K562 (cell line): ENCODE measurements at regions of chr20 and their contacts with region 1.

Region 1: GRCh38 chr20:1212607-1213396 is 9.5 kb downstream of the C20orf202 start:
- DNase-seq: peak; percentile 61 to 89 (median 67)
- ATAC-seq: peak; percentile 93
- H3K4me3 ChIP-seq: no peak overlapping the region
- H3K27ac ChIP-seq: no peak overlapping the region
- H3K4me1 ChIP-seq: peaks cover 13 to 35% of the 10 kb centered on the region in 2 experiments; a peak in 4 of 5 replicates
- H3K27me3 ChIP-seq: no peaks in the 10 kb centered on the region
- CTCF ChIP-seq: peak; percentile 70 to 84 (median 74)
- EP300 ChIP-seq: no peak
- POLR2A ChIP-seq: no peak
- RAD21 ChIP-seq: peak; percentile 79 to 87

Region 2: GRCh38 chr20:973785-974194 is 239.0 kb before region 1 on chr20:
- CTCF ChIA-PET with region 1: no interaction called
- POLR2A ChIA-PET with region 1: interaction called, 3 read pairs
- in situ Hi-C with region 1: no loop called
- intact Hi-C with region 1: loop called (anchors 10 kb)
- DNase-seq: peak; percentile 60 to 71 (median 66)
- ATAC-seq: peak; percentile 92
- H3K4me3 ChIP-seq: no peak overlapping the region
- H3K27ac ChIP-seq: no peak overlapping the region
- H3K4me1 ChIP-seq: peaks cover 0 to 7% of the 10 kb centered on the region in 2 experiments; a peak in 3 of 5 replicates
- H3K27me3 ChIP-seq: no peaks in the 10 kb centered on the region; a peak in 3 of 5 replicates
- CTCF ChIP-seq: peak; percentile 51 to 68 (median 59)
- EP300 ChIP-seq: no peak
- POLR2A ChIP-seq: no peak
- RAD21 ChIP-seq: peak; percentile 51 to 70

Region 3: DNA sequence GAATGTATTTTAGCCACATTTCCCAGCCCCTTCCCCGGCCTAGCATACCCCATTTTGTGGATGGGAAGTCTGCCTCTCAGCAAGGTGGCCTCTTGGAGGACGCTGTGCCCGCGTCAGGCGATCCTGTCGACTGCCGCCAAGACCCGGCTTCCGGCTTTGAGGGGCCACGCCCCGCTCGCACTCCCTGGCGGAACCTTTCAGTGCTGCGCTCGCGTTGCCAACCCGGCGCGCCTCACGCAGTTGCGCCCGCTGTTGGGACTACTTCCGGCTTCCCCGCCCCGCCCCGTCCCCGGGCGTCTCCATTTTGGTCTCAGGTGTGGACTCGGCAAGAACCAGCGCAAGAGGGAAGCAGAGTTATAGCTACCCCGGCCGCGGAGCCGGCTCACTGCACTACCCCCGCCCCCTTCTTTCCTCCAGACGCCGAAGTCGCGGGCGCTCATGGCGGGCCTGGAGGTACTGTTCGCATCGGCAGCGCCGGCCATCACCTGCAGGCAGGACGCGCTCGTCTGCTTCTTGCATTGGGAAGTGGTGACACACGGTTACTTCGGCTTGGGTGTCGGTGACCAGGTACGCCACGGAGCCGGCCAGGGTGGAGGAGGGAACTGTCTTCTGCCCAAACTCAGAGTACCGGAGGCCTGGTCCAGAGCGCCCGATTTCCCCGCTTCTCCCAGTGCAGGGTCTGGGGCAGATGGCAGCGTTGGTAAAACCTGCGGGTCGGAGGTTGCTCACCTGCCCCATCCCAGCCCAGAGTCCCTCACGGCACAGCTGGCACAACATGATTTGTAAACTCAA is 94.3 kb before region 1 on chr20 and contains the start of gene PSMF1:
- CTCF ChIA-PET with region 1: interaction called, 3 read pairs
- POLR2A ChIA-PET with region 1: no interaction called
- in situ Hi-C with region 1: no loop called
- intact Hi-C with region 1: loop called (anchors 5 kb)
- DNase-seq: peak; percentile 86 to 92 (median 87)
- ATAC-seq: peak; percentile 94
- H3K4me3 ChIP-seq: peak within 1 kb of the TSS; percentile 90
- H3K27ac ChIP-seq: peak within 1 kb of the TSS; percentile 86
- H3K4me1 ChIP-seq: peaks cover 14 to 42% of the 10 kb centered on the region in 2 experiments; a peak in 4 of 5 replicates
- H3K27me3 ChIP-seq: no peaks in the 10 kb centered on the region
- CTCF ChIP-seq: peak in 2 of 3 experiments; percentile 8 to 22; a peak in 2 of 6 replicates
- EP300 ChIP-seq: peak; percentile 50
- POLR2A ChIP-seq: peak; percentile 84
- RAD21 ChIP-seq: 0 out of 4 replicates have a peak, but pooled peaks of 1 of the 2 experiments have one; percentile 11
- polyA plus RNA-seq, gene PSMF1: 8.5 to 21.3 TPM

Region 4: GRCh38 chr20:1134355-1134754 is 78.4 kb before region 1 on chr20:
- CTCF ChIA-PET with region 1: no interaction called
- POLR2A ChIA-PET with region 1: no interaction called
- in situ Hi-C with region 1: no loop called
- intact Hi-C with region 1: no loop called
- DNase-seq: no peak
- ATAC-seq: no peak
- H3K4me3 ChIP-seq: no peak overlapping the region
- H3K27ac ChIP-seq: no peak overlapping the region
- H3K4me1 ChIP-seq: no peaks in the 10 kb centered on the region
- H3K27me3 ChIP-seq: no peaks in the 10 kb centered on the region
- CTCF ChIP-seq: no peak
- EP300 ChIP-seq: no peak
- POLR2A ChIP-seq: no peak
- RAD21 ChIP-seq: no peak

Region 5: DNA sequence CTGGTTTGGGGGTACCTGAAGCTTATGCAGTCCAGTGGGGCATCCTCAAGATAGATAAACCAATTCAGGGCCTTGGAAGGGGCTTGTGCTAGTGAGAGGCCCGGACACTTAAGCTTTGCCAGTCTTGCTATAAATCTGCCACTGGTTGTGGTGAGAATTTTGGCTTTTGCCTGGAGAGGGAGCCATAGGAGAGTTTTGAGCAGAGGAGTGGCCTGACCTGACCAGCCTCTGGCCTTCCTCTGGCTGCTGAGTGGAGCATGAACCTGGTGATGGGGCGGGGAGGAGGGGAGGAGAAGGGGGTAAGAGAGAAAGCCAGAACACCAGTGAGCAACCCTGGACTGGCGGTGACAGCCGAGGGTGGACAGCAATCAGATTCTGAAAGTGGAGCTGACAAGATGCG is 35.1 kb before region 1 on chr20:
- CTCF ChIA-PET with region 1: interaction called, 6 read pairs
- POLR2A ChIA-PET with region 1: interaction called, 5 read pairs
- in situ Hi-C with region 1: no loop called
- intact Hi-C with region 1: loop called (anchors 5 kb)
- DNase-seq: peak; percentile 47 to 61 (median 54)
- ATAC-seq: peak; percentile 86
- H3K4me3 ChIP-seq: no peak overlapping the region
- H3K27ac ChIP-seq: no peak overlapping the region
- H3K4me1 ChIP-seq: peaks cover 21 to 27% of the 10 kb centered on the region in 2 experiments
- H3K27me3 ChIP-seq: no peaks in the 10 kb centered on the region
- CTCF ChIP-seq: peak; percentile 42 to 61 (median 54); a peak in 5 of 6 replicates
- EP300 ChIP-seq: no peak
- POLR2A ChIP-seq: no peak
- RAD21 ChIP-seq: peak in 1 of 2 experiments; percentile 60; a peak in 2 of 4 replicates

Region 6: DNA sequence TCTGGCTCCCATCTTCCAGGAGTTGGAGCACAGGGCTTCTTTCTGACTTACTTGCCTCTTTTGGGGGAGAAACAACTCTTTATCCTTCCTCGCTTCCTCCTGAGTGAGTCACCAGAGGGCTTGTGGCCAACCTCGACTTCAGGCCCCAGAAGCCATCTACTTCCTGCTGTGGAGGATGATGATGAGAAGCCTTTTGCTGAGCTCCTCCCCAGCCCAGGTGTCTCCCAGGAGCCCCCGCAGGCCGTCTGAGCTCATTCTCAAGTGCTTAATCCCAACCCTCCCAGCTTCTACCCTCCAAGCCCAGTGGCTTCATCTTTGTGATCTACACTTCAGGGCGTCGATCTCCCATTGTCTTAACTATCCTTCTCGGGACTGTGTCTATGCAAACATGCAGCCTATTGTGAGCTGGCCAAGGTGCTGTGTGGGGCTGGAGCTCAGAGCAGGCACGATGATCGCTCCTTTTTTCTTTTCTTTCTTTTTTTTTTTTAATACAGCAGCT is 88.3 kb after region 1 on chr20:
- CTCF ChIA-PET with region 1: no interaction called
- POLR2A ChIA-PET with region 1: no interaction called
- in situ Hi-C with region 1: no loop called
- intact Hi-C with region 1: loop called (anchors 10 kb)
- DNase-seq: peak; percentile 38 to 60 (median 46)
- ATAC-seq: peak; percentile 61
- H3K4me3 ChIP-seq: no peak overlapping the region
- H3K27ac ChIP-seq: peak overlapping the region; percentile 33; the same call in 2 of the 3 replicates
- H3K4me1 ChIP-seq: peaks cover 3 to 25% of the 10 kb centered on the region in 2 experiments; a peak in 4 of 5 replicates
- H3K27me3 ChIP-seq: no peaks in the 10 kb centered on the region
- CTCF ChIP-seq: no peak
- EP300 ChIP-seq: no peak
- POLR2A ChIP-seq: no peak
- RAD21 ChIP-seq: no peak

Region 7: DNA sequence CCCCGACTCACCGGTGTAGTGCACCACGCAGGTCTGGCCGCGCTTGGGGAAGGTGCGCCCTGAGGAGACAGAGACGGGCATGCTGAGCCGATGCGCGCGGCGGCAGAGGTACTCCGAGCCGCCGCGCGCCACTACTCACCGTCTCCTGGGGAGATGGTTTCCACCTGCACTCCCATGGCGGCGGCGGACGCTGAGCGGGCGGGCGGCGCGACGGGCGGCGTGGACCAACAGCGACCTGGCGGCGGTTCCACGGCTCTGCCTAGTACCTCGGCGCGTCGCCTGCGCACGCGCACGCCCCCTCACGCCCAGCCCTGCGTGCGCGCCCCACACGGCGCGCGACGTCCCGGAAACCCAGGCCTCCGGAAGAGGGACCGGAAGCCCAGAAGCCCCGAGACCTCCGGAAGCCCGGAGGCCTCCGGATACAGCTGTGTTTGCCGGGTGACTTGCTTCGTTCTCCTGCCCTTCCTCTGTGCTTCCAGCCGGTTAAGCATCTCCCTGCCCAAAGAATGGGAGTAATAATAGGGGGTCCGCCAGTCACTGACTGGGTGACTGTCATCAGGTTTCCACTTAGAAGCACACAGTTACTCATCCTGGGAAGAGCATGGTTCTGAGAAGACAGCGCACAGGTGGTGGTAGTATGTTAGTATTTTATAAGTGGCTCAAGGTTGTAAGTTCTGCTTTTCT is 180.2 kb after region 1 on chr20 and contains the start of gene FKBP1A:
- CTCF ChIA-PET with region 1: no interaction called
- POLR2A ChIA-PET with region 1: no interaction called
- in situ Hi-C with region 1: no loop called
- intact Hi-C with region 1: loop called (anchors 10 kb)
- DNase-seq: peak; percentile 87 to 92 (median 90)
- ATAC-seq: peak; percentile 95
- H3K4me3 ChIP-seq: peak within 1 kb of the TSS; percentile 93
- H3K27ac ChIP-seq: peak within 1 kb of the TSS; percentile 66
- H3K4me1 ChIP-seq: peaks cover 14 to 23% of the 10 kb centered on the region in 2 experiments; a peak in 4 of 5 replicates
- H3K27me3 ChIP-seq: no peaks in the 10 kb centered on the region; a peak in 1 of 5 replicates
- CTCF ChIP-seq: peak in 1 of 3 experiments; percentile 5; a peak in 1 of 6 replicates
- EP300 ChIP-seq: no peak
- POLR2A ChIP-seq: peak; percentile 54; the same call in 1 of the 2 replicates
- RAD21 ChIP-seq: 0 out of 4 replicates have a peak, but pooled peaks of 1 of the 2 experiments have one; percentile 2
- polyA plus RNA-seq, gene FKBP1A: 63.5 to 82.4 TPM